Activated T-helper 1 cell treated with anti-CD3 and anti-CD28 coated beads, Interleukin-12 subunit alpha, Interleukin-12 subunit beta, Interleukin-2, Interleukin-4 antibody, amounts not matched to agents 30 ng/mL and 10 ng/mL and 1 ng/mL, durations not matched to agents 14 hours and 24 hours and 36 hours (primary cell): ENCODE measurements at regions of chr16 and their contacts with region 1.

Region 1: GRCh38 chr16:86059253-86060171 is 160.6 kb downstream of the IRF8 start:
- DNase-seq: no peak
- H3K4me3 Mint-ChIP-seq: no peak overlapping the region
- H3K27ac Mint-ChIP-seq: no peak overlapping the region
- H3K4me1 Mint-ChIP-seq: no peaks in the 10 kb centered on the region
- H3K27me3 Mint-ChIP-seq: peaks cover 2% of the 10 kb centered on the region

Region 2: DNA sequence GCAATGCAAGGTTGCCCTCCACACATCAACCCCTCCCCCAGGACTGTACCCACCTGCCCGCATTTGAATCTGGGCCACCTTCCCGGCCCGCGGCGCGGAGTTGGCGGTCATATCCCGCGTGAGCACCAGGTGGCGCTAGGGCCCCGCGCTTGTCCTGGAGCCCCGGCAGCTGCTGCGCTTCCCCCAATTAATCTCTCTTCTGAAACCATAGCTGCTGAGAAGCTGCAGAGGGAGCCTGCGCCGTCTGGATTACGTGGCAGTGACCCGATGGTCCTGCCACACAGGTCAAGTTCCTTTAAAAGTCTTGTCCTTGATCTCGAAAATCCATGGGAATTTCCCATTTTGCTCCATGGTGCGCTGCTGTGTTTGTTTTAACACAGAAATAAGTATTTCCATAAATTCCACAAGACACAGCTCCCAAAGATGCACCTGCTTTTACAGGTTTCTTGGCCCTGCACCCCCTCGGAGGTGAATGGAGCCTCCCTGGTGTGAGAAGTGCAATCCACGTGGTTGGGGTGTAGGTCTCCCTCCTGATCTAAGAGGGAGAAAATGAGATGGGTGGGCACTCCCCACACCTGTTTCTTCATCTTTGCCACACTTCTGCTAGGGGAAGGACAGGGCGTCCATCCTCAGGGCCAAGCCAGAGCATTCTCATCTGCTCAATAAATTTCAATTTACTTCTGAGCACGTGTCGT is 237.9 kb before region 1 on chr16:
- intact Hi-C with region 1: no loop called
- DNase-seq: peak; percentile 68
- H3K4me3 Mint-ChIP-seq: no peak overlapping the region
- H3K27ac Mint-ChIP-seq: no peak overlapping the region
- H3K4me1 Mint-ChIP-seq: no peaks in the 10 kb centered on the region
- H3K27me3 Mint-ChIP-seq: peaks cover 8% of the 10 kb centered on the region

Region 3: DNA sequence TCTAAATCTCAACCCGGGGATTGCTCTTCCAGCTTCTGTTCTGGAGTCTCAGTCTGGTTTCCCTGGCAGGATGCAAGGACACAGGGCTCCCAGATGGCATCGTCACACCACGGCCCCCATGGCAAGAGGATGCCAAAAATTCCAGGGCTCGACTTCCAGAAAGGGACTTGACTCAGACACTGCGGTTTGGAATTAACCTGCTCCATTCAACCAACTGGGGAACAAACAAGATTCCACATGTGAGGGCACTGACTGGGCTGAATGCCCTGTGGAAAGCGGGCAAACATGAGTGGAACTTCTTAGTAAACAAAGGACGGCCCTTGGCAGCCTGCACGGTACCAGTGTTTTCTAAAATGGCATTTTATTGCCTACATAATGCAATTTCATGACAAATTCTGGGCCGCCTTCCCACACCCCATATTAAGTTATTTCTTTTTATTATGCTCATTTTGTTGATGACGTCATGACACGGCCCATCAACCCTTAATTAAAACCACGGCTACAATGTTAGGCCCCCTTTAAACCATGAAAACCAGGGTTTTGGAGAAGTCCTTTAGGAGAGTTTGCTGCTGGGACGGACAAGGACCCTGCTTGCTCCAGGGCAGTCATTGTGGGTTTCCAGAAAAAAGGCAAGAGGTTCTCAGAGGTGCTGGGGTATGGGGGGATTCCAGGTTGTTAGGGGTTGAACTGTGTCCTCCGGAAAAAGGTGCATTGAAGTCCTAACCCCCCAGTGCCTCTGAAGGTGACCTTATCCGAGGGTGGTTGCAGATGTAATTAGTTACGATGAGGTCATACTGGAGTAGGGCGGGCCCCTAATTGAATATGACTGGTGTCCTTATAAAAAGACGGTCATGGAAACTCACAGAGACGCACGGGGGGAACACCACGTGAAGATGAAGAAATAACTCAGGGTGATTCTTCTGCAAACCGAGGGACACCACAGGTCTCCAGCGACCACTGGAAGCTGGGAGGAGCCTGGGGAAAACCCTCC is 724.4 kb after region 1 on chr16:
- intact Hi-C with region 1: loop called (anchors 10 kb)
- DNase-seq: no peak
- H3K4me3 Mint-ChIP-seq: no peak overlapping the region
- H3K27ac Mint-ChIP-seq: no peak overlapping the region
- H3K4me1 Mint-ChIP-seq: no peaks in the 10 kb centered on the region
- H3K27me3 Mint-ChIP-seq: peaks cover 5% of the 10 kb centered on the region